ENCODE measurements at regions of chr12 and their contacts with region 1.

Region 1: DNA sequence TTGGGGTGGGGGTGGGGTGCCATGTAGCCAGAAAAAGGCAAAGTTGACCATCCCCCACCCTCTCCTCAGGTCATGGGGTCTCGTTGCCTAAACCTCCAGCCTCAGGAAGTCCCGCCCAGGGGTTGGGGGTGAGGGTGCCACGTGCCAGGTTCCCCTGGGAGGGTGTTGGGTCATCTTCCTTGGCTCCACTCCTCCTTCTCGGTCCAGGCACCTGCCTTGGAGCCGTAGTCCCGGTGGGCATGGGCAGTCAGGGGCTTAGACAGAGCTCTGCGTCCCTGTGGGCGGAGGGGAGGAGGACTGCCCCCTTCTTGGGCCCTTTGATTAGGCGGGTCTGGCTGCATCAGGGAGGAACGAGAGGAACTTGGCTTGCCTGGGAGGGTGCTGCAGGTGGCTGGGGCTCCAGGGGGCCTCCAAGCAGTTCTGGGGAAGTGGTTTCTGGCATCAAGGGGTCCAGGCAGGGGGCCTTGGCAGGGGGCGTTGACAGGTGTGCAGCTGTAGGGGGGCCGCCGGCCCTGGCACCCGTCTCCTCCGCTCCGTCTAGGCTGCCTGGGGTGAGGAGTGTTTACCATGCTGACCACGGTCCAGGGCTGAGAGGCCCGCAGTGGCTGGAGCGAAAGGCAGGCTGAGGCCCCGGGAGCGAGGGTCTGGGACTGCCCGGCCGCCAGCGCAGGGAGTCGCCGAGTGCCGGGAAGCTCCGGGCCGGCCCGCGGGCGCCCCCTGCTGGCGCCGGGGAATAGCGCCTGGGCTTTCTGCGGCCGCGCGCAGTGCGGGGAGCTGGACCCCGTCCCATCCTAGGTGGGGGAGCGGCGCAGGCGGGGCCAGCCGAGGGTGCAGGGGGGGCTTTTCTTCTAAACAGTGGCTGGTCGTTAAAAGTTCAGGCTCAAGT is 7.9 kb downstream of the SETD1B start:
- DNase-seq: peak in 8 of 10 donors; percentile 58 to 95 (median 74)

Region 2: GRCh38 chr12:121773011-121773777 is 38.5 kb before region 1 on chr12:
- intact Hi-C with region 1: loop called (anchors 5 kb)
- DNase-seq: peak in 8 of 10 donors; percentile 52 to 94 (median 70)

Region 3: GRCh38 chr12:121793838-121794533 is 17.7 kb before region 1 on chr12:
- intact Hi-C with region 1: loop called (anchors 1 kb)
- DNase-seq: peak; percentile 80 to 98 (median 86)

Measured in posterior cingulate gyrus (tissue), 11 donors.